A673 (cell line): ENCODE measurements at regions of chr6 and their contacts with region 1.

Region 1: DNA sequence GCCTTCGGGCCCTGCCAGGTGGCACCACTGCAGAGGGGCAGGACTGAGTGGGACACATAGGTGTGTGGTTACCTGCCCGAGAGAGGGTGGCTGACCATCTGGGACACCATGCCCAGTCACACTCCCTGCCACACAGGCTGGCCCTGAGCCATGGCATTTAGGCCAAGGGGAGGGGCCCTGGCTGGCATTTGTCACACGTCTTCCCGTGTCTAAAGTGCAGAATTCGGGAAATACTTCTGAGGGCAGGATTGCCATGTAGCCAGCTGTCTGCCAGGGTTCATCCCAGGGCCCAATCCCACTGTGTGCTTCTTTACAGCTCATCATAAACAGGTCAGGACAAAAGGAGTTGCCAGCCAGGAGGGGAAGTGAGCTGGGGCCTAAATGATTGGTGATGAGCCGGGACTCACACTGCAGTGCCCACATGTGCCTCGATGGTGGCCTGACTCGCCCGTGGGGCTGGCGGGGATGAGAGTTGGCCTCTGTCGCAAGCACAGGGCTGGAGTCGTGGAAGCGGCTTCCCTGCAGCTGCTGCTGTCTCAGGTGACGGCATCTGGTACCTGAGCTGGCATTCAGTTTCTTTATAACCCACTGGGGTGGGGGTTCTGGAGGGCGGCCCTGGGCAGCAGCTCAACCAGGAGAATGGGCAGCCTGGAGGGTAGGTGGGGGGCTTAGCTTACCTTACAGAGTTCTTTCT is 5.9 kb upstream of the UNC93A start:
- DNase-seq: no peak
- H3K4me3 ChIP-seq: no peak overlapping the region
- H3K27ac ChIP-seq: no peak overlapping the region
- H3K4me1 ChIP-seq: no peaks in the 10 kb centered on the region
- H3K27me3 ChIP-seq: no peaks in the 10 kb centered on the region
- CTCF ChIP-seq: no peak

Region 2: GRCh38 chr6:166936079-166936787 is 349.0 kb before region 1 on chr6:
- CTCF ChIA-PET with region 1: no interaction called
- POLR2A ChIA-PET with region 1: no interaction called
- intact Hi-C with region 1: no loop called
- DNase-seq: no peak
- H3K4me3 ChIP-seq: no peak overlapping the region
- H3K27ac ChIP-seq: no peak overlapping the region
- H3K4me1 ChIP-seq: no peaks in the 10 kb centered on the region
- H3K27me3 ChIP-seq: no peaks in the 10 kb centered on the region
- CTCF ChIP-seq: no peak

Region 3: DNA sequence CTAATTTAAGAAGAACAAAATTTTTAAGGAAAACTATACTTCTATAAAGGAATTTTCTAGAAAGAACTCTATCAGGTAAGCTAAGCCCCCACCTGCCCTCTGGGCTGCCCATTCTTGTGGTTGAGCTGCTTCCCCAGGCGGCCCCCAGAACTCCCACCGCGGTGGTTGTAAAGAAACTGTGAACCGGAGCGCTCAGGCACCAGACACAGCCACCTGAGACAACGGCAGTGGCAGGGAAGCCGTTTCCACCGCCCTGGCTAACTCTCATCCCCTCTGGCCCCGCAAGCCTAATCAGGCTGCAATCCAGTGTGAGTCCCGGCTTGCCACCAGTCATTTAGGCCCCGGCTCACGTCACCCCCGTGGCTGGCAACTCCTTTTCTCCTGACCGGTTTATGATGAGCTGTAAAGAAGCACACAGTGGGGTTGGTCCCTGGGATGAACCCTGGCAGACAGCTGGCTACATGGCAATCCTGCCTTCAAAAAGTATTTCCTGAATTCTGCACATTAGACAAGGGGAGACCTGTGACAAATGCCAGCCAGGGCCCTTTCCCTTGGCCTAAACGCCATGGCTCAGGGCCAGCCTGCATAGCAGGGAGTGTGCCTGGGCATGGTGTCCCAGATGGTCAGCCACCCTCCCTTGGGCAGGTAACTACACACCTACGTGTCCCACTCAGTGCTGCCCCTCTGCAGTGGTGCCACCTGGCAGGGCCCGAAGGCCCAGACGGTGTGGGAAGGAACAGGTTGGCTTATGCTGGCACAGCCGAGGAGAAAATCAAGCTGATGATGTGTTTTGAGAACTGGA is 63.6 kb before region 1 on chr6:
- CTCF ChIA-PET with region 1: interaction called, 4 read pairs
- POLR2A ChIA-PET with region 1: no interaction called
- intact Hi-C with region 1: loop called (anchors 2 kb)
- DNase-seq: no peak
- H3K4me3 ChIP-seq: no peak overlapping the region
- H3K27ac ChIP-seq: no peak overlapping the region
- H3K4me1 ChIP-seq: no peaks in the 10 kb centered on the region
- H3K27me3 ChIP-seq: no peaks in the 10 kb centered on the region
- CTCF ChIP-seq: no peak